ENCODE measurements at regions of chr6 and their contacts with region 1.

Region 1: GRCh38 chr6:111739257-111739696 is 133.6 kb upstream of the TRAF3IP2 start:
- DNase-seq: no peak
- H3K4me3 Mint-ChIP-seq: no peak overlapping the region
- H3K27ac Mint-ChIP-seq: no peak overlapping the region
- H3K4me1 Mint-ChIP-seq: peaks cover 17% of the 10 kb centered on the region
- H3K27me3 Mint-ChIP-seq: no peaks in the 10 kb centered on the region
- CTCF ChIP-seq: no peak

Region 2: DNA sequence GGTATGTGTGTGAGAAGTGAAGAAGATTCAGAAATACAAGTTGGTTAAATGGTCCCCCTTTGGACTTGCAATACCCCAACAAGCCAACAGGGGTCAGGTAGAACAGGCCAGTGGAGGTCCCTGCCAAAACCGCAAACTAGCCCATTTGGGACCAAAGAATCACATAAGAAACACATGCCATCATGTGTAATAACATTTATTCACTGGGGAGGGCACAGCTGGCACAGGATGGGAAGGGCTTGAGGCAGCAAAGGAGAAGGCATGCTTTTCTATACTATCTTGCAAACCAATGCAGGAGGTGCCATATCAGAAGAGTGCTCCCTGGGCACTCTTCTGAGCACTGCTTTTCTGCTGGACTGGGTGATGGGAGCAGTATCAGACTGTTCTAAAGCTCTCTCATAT is 17.5 kb before region 1 on chr6:
- CTCF ChIA-PET with region 1: interaction called, 14 read pairs
- POLR2A ChIA-PET with region 1: no interaction called
- intact Hi-C with region 1: no loop called
- DNase-seq: peak; percentile 58
- H3K4me3 Mint-ChIP-seq: no peak overlapping the region
- H3K27ac Mint-ChIP-seq: no peak overlapping the region
- H3K4me1 Mint-ChIP-seq: peaks cover 19% of the 10 kb centered on the region
- H3K27me3 Mint-ChIP-seq: no peaks in the 10 kb centered on the region
- CTCF ChIP-seq: peak; percentile 79